Left ventricle myocardium superior (tissue), 1 donor: ENCODE measurements at regions of chr14 and their contacts with region 1.

Region 1: GRCh38 chr14:58297762-58298476 is 436 bp upstream of the ARID4A start:
- DNase-seq: peak; percentile 98
- ATAC-seq: peak; percentile 95

Region 2: GRCh38 chr14:58244556-58245387 is 53.1 kb before region 1 on chr14 and contains the start of gene PSMA3:
- intact Hi-C with region 1: loop called (anchors 10 kb)
- DNase-seq: peak; percentile 97
- ATAC-seq: peak; percentile 94
- total RNA-seq, gene PSMA3: 163 TPM